ENCODE measurements at regions of chr2 and their contacts with region 1.

Region 1: DNA sequence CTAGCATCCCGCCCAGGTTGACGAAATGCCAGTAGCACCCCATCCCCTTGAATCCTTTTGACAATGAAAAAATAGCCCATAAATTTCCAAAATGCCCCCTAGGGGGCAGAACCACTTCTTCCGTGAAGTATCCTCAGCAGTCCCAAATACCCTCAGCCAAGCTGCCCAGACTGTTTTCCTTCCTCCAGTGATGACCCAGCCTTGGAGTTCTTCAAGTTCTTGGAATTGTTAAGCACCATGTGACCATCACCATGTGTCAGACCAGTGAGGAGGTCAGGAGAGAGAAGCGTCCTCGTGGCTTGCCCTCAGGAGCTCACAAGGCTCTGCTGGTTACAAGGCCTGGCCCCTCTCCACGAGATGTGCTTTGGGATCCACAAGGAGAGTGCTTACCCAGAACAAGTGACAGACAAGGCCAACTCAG is 1.4 kb upstream of the SLC23A3 start:
- DNase-seq: peak in 7 of 14 experiments; percentile 5 to 69 (median 53)
- ATAC-seq: peak; percentile 62
- H3K4me3 ChIP-seq: no peak overlapping the region
- H3K4me3 Mint-ChIP-seq: no peak overlapping the region
- H3K27ac ChIP-seq: peak overlapping the region in 1 of 2 donors; percentile 4
- H3K27ac Mint-ChIP-seq: peak overlapping the region; percentile 69
- H3K4me1 ChIP-seq: peaks cover 42% of the 10 kb centered on the region
- H3K4me1 Mint-ChIP-seq: peaks cover 35% of the 10 kb centered on the region
- H3K27me3 ChIP-seq: no peaks in the 10 kb centered on the region
- H3K27me3 Mint-ChIP-seq: no peaks in the 10 kb centered on the region
- CTCF ChIP-seq: peak; percentile 79

Region 2: GRCh38 chr2:219160186-219161017 is 10.8 kb before region 1 on chr2 and contains the start of gene NHEJ1:
- CTCF ChIA-PET with region 1: interaction called, 21 read pairs
- POLR2A ChIA-PET with region 1: interaction called, 6 read pairs
- intact Hi-C with region 1: loop called in 1 of 2 experiments (anchors 1 kb)
- DNase-seq: peak; percentile 82 to 97 (median 90)
- ATAC-seq: peak; percentile 90
- H3K4me3 ChIP-seq: peak within 1 kb of the TSS; percentile 78
- H3K4me3 Mint-ChIP-seq: peak within 1 kb of the TSS; percentile 94
- H3K27ac ChIP-seq: peak within 1 kb of the TSS; percentile 52 to 77
- H3K27ac Mint-ChIP-seq: peak within 1 kb of the TSS; percentile 94
- H3K4me1 ChIP-seq: peaks cover 17% of the 10 kb centered on the region
- H3K4me1 Mint-ChIP-seq: peaks cover 24% of the 10 kb centered on the region
- H3K27me3 ChIP-seq: no peaks in the 10 kb centered on the region
- H3K27me3 Mint-ChIP-seq: no peaks in the 10 kb centered on the region
- CTCF ChIP-seq: peak; percentile 97
- total RNA-seq, gene NHEJ1: 7.2 to 8.5 TPM

Measured in CD4-positive, alpha-beta T cell (primary cell).